WTC11 (cell line): ENCODE measurements at regions of chr2 and their contacts with region 1.

Region 1: DNA sequence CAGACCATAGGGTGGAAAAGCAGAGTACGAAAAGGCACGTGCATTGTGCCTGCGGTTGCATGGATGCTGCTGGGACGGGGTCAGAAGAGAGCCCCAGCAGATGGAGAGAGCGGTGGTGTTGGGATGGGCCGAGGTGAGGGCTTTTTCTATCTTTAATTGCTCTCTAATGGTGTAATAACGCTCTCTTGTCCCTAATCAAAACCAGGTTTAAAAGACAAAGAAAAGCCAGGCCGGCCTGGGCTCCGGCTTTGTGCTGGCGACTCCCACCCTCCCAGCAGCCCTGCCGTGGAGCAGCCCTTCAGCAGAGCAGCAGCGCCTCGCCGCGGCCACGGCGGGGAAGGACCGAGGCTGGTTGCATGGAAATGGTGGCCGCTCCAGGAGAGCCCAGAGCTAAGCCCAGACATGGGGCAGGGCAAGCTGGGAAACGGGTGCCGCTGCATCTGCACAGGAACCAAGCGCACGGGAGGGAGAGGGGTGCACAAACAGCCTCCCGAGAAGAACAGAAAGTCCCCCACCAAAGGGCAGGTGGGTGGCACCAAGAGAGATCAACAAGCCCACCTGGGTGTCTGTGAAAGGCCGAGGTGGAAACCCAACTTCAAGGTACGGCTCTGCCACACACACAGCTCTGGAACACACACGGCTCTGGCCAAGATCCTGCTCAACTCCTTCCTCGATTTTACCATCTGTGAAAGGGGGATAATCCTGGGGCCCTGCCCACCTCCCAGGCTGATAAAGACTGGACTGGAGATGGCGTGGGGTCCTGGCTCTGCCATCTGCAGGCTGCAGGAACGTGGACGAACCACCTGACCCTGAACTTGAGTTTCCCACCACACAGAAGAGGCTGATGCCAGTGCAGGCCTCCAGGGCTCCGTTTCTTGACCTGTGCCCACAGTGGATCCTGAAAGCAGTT is 15.0 kb downstream of the HS1BP3 start:
- DNase-seq: peak; percentile 93
- ATAC-seq: peak; percentile 96
- H3K4me3 Mint-ChIP-seq: no peak overlapping the region
- H3K27ac Mint-ChIP-seq: no peak overlapping the region
- H3K4me1 Mint-ChIP-seq: peaks cover 33% of the 10 kb centered on the region
- H3K27me3 Mint-ChIP-seq: no peaks in the 10 kb centered on the region
- CTCF ChIP-seq: peak; percentile 75

Region 2: DNA sequence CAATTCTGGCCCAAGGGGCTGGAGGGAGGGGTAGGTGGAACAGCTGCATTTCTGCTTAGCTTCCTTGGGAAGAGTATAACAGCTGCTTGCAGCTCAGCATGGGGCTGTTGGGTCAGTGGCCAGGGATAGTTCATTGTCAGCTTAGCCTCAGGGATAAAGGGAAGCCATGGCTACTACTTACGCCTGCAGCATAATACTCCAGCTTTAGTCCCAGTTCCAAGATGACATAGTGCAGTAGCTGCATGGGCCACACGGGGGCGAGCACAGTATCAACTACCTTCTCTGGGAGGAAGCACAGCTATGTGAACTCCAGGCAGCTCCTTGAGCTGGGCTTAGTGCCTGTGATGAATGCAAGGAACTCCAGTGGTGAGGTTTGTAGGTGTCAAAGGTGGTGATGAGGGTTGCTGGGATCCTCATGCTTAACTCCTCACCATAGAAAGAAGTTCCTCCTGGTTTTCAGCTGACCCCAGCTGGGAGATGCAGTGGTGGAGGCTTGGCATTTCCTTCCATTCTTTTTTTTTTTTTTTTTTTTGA is 224.5 kb before region 1 on chr2:
- CTCF ChIA-PET with region 1: interaction called, 48 read pairs
- POLR2A ChIA-PET with region 1: no interaction called
- DNase-seq: peak; percentile 89
- ATAC-seq: peak; percentile 100
- H3K4me3 Mint-ChIP-seq: no peak overlapping the region
- H3K27ac Mint-ChIP-seq: no peak overlapping the region
- H3K4me1 Mint-ChIP-seq: no peaks in the 10 kb centered on the region
- H3K27me3 Mint-ChIP-seq: peaks cover 6% of the 10 kb centered on the region
- CTCF ChIP-seq: peak; percentile 78

Region 3: GRCh38 chr2:20438334-20439192 is 197.4 kb before region 1 on chr2:
- CTCF ChIA-PET with region 1: interaction called, 118 read pairs
- POLR2A ChIA-PET with region 1: no interaction called
- DNase-seq: no peak
- ATAC-seq: no peak
- H3K4me3 Mint-ChIP-seq: no peak overlapping the region
- H3K27ac Mint-ChIP-seq: no peak overlapping the region
- H3K4me1 Mint-ChIP-seq: peaks cover 6% of the 10 kb centered on the region; the same call in 1 of the 2 replicates
- H3K27me3 Mint-ChIP-seq: no peaks in the 10 kb centered on the region; the same call in 1 of the 2 replicates
- CTCF ChIP-seq: no peak

Region 4: GRCh38 chr2:20617892-20618467 is 17.9 kb before region 1 on chr2:
- CTCF ChIA-PET with region 1: interaction called, 27 read pairs
- POLR2A ChIA-PET with region 1: interaction called, 3 read pairs
- DNase-seq: no peak
- ATAC-seq: peak; percentile 11; the same call in 1 of the 2 replicates
- H3K4me3 Mint-ChIP-seq: no peak overlapping the region
- H3K27ac Mint-ChIP-seq: peak overlapping the region; percentile 72; the same call in 1 of the 2 replicates
- H3K4me1 Mint-ChIP-seq: peaks cover 31% of the 10 kb centered on the region
- H3K27me3 Mint-ChIP-seq: no peaks in the 10 kb centered on the region
- CTCF ChIP-seq: no peak

Region 5: GRCh38 chr2:20661067-20661980 is 25.4 kb after region 1 on chr2:
- CTCF ChIA-PET with region 1: interaction called, 13 read pairs
- POLR2A ChIA-PET with region 1: no interaction called
- DNase-seq: peak; percentile 76
- ATAC-seq: peak; percentile 70
- H3K4me3 Mint-ChIP-seq: no peak overlapping the region
- H3K27ac Mint-ChIP-seq: no peak overlapping the region
- H3K4me1 Mint-ChIP-seq: peaks cover 21% of the 10 kb centered on the region
- H3K27me3 Mint-ChIP-seq: peaks cover 67% of the 10 kb centered on the region
- CTCF ChIP-seq: peak; percentile 92